ENCODE measurements at regions of chr14 and their contacts with region 1.

Region 1: GRCh38 chr14:51979088-51979709 is 10.1 kb upstream of the RTRAF start:
- DNase-seq: peak; percentile 90
- H3K4me3 ChIP-seq: no peak overlapping the region
- H3K27ac ChIP-seq: peak overlapping the region; percentile 5 to 44 (median 24)
- H3K4me1 ChIP-seq: peaks cover 0 to 10% (median 6%) of the 10 kb centered on the region in 4 donors
- H3K27me3 ChIP-seq: no peaks in the 10 kb centered on the region
- CTCF ChIP-seq: peak; percentile 49 to 86 (median 80)
- EP300 ChIP-seq: no peak
- POLR2A ChIP-seq: no peak

Region 2: DNA sequence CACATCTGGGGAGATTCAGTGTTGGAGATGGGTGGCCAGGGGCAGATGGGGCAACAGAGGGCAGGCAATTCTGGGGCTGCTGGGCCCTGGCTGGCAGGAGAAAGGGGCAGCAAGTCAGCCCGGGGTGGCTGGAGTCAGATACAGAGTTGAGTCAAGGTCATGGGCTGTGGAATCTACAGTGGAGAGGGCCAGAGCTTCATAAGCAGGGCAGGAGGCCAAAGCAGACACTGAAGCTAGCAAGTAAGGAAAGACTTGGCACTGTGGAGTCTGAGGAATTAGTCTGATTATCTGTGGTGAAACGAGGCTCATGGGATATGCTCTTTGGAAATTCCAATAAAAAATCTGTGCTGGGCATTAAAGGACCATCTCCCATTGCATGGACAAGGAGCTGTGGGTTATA is 643.7 kb before region 1 on chr14:
- intact Hi-C with region 1: no loop called
- DNase-seq: peak; percentile 84
- H3K4me3 ChIP-seq: no peak overlapping the region
- H3K27ac ChIP-seq: peak overlapping the region; percentile 61 to 81 (median 63)
- H3K4me1 ChIP-seq: peaks cover 0 to 57% (median 47%) of the 10 kb centered on the region in 4 donors
- H3K27me3 ChIP-seq: no peaks in the 10 kb centered on the region
- CTCF ChIP-seq: no peak
- EP300 ChIP-seq: no peak
- POLR2A ChIP-seq: no peak

Region 3: GRCh38 chr14:51780006-51780692 is 199.1 kb before region 1 on chr14:
- intact Hi-C with region 1: loop called (anchors 5 kb)
- DNase-seq: peak; percentile 87
- H3K4me3 ChIP-seq: no peak overlapping the region
- H3K27ac ChIP-seq: no peak overlapping the region
- H3K4me1 ChIP-seq: peaks cover 0 to 21% (median 11%) of the 10 kb centered on the region in 4 donors
- H3K27me3 ChIP-seq: no peaks in the 10 kb centered on the region
- CTCF ChIP-seq: peak; percentile 59 to 80 (median 75)
- EP300 ChIP-seq: no peak
- POLR2A ChIP-seq: no peak

Region 4: DNA sequence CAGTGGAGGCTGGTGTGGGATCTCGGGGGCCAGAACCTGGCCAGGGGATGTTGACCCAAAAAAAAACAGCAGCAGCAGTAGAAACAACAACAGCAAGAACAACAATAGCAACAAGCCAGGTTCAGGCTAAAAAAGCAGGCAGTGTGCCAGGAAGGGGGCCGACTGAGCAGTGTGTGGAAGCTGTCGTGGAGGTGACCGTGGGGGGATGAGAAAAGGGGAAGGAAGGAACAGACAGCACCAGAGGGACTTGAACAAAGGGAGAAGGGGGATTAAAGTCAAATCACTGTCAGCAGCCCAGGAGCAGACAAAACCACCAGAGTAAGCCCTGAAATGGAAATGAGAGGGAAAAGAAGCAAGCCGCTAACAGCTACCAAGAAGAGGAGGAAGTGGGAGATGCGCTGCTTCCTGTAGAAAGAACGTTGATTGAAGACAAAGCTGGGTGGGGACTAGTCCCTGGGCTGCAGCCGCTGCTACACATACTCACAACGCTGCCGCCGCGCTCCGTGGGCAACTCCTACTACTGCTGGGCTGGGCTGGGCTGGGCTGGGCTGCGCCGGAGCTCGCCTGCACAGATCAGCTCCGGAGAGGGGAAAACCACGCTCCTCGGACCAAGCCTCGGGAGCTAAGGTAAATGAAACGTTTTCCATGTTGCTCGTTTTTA is 118.9 kb before region 1 on chr14 and contains the start of gene GNG2:
- intact Hi-C with region 1: loop called (anchors 2 kb)
- DNase-seq: peak; percentile 91
- H3K4me3 ChIP-seq: peak within 1 kb of the TSS; percentile 39 to 52 (median 44)
- H3K27ac ChIP-seq: peak within 1 kb of the TSS; percentile 32 to 71 (median 62)
- H3K4me1 ChIP-seq: peaks cover 0 to 25% (median 10%) of the 10 kb centered on the region in 4 donors
- H3K27me3 ChIP-seq: no peaks in the 10 kb centered on the region
- CTCF ChIP-seq: no peak
- EP300 ChIP-seq: no peak
- POLR2A ChIP-seq: peak; percentile 47 to 51
- total RNA-seq, gene GNG2: 27.3 to 44.2 (median 29.1) TPM

Region 5: GRCh38 chr14:52202151-52202550 is 223.0 kb after region 1 on chr14:
- intact Hi-C with region 1: no loop called
- DNase-seq: no peak
- H3K4me3 ChIP-seq: no peak overlapping the region
- H3K27ac ChIP-seq: no peak overlapping the region
- H3K4me1 ChIP-seq: no peaks in the 10 kb centered on the region
- H3K27me3 ChIP-seq: no peaks in the 10 kb centered on the region
- CTCF ChIP-seq: no peak
- EP300 ChIP-seq: no peak
- POLR2A ChIP-seq: no peak